MCF 10A (cell line): ENCODE measurements at regions of chr14 and their contacts with region 1.

Region 1: DNA sequence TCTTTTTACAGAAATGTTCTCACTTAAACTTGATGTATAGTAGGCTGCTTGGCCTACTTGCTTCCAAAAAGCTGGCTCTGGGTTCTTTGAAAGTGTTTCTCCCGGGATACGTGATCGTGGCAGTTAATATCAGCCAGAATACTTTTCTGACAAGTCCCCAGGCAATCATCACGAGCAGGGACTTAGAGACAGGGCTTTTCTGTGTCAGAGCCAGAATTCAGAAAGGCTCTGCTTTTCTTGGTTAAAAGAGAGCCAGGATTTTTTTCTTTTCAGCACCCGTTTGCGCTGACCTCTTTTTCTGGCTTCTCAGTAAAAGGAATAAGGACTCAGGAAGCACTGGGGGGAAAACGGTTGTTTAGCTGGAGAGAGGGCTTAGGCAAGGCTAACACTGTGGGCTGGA is 57.8 kb upstream of the ARHGAP5 start:
- DNase-seq: no peak
- H3K4me3 Mint-ChIP-seq: no peak overlapping the region
- H3K27ac Mint-ChIP-seq: peak overlapping the region; percentile 31
- H3K4me1 Mint-ChIP-seq: peaks cover 21% of the 10 kb centered on the region
- H3K27me3 Mint-ChIP-seq: no peaks in the 10 kb centered on the region
- CTCF ChIP-seq: no peak

Region 2: GRCh38 chr14:31945074-31945613 is 74.1 kb before region 1 on chr14:
- CTCF ChIA-PET with region 1: interaction called, 3 read pairs
- POLR2A ChIA-PET with region 1: interaction called, 23 read pairs
- intact Hi-C with region 1: no loop called
- DNase-seq: no peak
- H3K4me3 Mint-ChIP-seq: no peak overlapping the region
- H3K27ac Mint-ChIP-seq: peak overlapping the region; percentile 20
- H3K4me1 Mint-ChIP-seq: peaks cover 41% of the 10 kb centered on the region
- H3K27me3 Mint-ChIP-seq: no peaks in the 10 kb centered on the region
- CTCF ChIP-seq: no peak

Region 3: DNA sequence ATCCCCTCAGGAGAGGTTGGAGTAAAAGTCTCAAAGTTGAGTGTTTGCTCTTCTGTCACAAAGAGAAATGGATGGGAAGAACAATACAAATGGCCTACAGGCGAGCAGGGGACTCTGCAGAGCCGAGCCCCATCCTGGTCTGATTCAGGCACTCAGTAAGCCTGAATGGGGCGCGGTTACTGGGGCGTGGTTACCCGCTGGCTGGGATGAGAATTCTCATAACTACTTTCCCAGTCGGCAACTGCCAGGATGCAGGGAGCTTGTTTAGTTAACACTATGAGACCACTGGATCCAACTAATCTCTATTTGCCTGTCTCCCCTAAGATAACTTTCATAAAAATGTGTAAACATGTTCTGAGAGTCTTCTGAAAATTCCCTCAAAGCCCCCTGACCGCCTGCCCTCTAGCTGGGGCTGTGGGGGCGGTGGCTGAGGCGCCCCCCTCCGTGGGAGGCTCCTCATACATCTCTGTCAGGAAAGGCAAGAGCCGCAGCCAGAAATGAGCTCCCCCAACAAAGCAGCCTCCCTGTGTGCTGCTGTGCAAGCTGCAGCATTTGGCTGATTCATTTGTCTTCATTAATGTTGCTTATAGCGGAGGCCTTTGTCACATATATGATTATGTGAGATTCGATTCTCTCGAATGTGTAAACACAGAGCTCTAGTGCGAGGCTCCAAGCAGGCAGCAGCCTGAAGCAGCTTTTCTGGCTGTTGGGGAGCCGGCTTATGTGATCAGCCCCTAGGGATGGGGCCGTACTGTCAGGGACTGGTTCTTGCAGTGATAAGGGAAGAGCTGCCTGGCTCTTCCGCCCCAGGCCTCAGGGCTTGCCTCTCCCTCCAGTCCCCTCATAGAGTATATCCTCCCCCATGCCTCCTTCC is 68.3 kb before region 1 on chr14:
- CTCF ChIA-PET with region 1: no interaction called
- POLR2A ChIA-PET with region 1: interaction called, 23 read pairs
- intact Hi-C with region 1: no loop called
- DNase-seq: peak; percentile 67
- H3K4me3 Mint-ChIP-seq: no peak overlapping the region
- H3K27ac Mint-ChIP-seq: peak overlapping the region; percentile 37
- H3K4me1 Mint-ChIP-seq: peaks cover 45% of the 10 kb centered on the region
- H3K27me3 Mint-ChIP-seq: no peaks in the 10 kb centered on the region
- CTCF ChIP-seq: no peak